Cardiac septum (tissue), 1 donor: ENCODE measurements at regions of chr2 and their contacts with region 1.

Region 1: GRCh38 chr2:230712443-230713330 is at the start of gene CAB39:
- DNase-seq: peak; percentile 95
- total RNA-seq, gene CAB39: 75.1 TPM

Region 2: DNA sequence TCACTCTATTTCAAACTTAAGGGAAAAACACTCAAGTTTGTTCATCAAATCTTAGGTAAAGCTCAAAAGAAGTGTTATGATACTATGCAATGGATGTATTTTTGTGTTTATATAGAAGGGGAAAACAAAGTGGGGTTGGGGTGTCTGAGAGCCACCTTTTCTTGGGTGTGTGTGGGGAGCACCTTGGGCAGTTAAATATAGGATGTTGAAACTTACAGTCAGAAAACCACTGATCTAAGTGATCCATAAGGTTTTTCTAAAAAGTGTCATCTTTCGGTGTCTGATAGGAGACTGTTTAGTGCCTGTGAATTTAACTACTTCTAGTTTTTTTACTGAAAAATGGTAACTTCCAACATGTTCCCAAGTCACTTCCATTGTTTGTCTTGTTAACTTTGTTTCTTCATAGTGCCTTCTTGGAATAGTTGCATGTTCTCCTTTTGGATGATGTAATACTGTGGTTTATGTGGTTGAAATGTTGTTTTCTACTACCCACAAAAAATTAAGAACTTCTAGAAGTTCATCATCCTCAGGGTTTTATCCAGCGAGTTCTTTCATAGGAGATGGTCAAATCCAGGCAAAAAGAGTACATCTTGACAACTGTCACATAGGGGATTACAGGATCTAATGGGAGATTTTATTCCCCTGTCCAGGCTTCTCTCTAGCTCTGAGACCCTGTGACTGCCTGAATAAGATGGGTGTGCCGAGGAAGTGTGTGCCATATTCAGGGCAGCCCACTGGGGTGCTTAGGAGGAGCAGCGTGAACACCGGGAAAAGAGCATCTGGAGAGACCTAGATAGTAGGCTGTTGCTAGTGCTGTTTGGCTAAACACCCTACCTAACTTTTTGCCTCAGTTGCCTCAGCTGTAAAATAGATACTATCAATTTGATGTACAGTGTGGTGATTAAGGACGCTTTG is 46.1 kb after region 1 on chr2:
- intact Hi-C with region 1: loop called (anchors 5 kb)
- DNase-seq: no peak

Region 3: GRCh38 chr2:230798769-230799399 is 86.2 kb after region 1 on chr2:
- intact Hi-C with region 1: loop called (anchors 1 kb)
- DNase-seq: no peak

Region 4: GRCh38 chr2:230814616-230815015 is 101.9 kb after region 1 on chr2:
- intact Hi-C with region 1: no loop called
- DNase-seq: no peak

Region 5: DNA sequence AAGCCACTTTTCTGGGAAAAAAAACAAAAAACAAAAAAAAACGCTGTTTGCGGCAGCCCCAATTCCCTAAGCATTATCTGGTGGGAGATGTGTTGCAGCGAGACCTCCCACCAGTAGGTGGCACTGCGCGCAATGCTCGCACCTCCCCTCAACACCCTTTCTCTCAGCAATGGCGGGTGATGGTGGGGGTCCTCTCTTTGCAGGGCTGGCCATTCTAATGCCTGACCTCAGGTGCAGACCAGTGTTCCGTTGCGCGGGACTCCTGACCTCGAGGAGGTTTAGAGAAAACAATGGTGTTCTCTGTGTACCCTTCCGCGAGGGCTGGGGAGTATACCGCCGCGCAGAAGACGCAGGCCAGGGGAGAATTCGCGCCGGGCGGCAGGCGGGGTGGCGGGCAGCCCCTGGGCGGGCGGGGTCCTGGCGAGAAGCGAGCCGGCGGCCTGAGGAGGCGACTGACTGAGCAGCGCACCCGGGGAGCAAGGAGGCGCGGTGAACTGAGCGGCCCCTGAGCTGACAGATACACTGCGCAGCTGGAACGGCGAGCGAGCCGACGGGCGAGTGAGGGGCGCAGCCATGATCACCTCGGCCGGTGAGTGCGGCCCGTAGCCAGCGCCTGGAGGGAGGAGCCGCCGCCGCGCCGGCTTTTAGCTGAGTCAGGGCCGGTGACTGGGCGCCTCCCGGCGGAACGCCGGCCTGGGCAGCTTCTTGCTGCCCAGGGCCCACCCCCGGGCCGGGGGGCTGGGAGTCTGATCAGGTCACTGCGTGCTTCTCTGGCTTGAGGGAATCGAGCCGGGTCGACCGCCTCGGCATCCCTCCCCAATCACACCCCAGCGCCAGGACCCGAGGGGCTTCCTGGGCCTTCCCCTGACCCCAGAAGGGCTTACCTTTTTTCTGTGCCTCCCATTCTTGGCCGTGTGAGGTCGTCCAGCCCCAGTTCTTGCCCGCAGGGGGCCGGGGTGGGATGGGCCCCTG is 344.1 kb after region 1 on chr2 and contains the start of gene PSMD1:
- intact Hi-C with region 1: loop called (anchors 5 kb)
- DNase-seq: peak; percentile 96
- total RNA-seq, gene PSMD1: 87.0 TPM